ENCODE measurements at regions of chr19 and their contacts with region 1.

Region 1: DNA sequence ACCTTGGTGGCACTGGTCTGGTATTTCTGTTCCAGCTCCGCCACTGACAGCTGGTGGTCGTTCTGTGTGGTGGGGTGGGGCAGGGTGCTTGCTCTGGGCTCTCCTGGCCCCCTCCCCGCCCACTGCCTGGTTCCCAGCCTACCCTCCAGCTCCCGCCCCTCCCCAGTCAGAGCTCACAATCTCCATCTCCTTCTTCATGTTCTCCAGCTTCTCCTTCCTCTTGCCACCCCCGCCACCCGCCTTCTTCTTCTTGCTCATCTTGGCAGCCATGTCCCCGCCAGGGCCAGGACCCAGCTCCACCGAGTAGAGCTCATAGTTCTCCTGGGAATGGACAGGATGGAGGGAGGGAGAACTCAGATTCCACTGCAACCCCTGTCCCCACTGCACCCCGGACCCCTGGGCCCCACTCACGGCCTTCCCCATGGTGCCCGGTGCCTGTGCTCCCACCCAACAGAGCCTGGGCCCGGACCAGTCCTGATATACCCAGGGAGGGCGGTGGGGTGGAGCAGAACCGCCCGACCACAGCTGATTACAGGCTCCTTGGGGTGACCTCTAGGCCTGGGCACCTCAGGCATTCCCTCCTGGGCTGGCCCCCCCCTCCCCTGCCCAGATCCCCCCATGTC is at the start of gene ATP4A:
- DNase-seq: no peak
- H3K4me3 Mint-ChIP-seq: no peak within 1 kb of the TSS
- H3K27ac Mint-ChIP-seq: no peak within 1 kb of the TSS
- H3K4me1 Mint-ChIP-seq: peaks cover 4% of the 10 kb centered on the region
- H3K27me3 Mint-ChIP-seq: peaks cover 46% of the 10 kb centered on the region
- total RNA-seq, gene ATP4A: not detected

Region 2: DNA sequence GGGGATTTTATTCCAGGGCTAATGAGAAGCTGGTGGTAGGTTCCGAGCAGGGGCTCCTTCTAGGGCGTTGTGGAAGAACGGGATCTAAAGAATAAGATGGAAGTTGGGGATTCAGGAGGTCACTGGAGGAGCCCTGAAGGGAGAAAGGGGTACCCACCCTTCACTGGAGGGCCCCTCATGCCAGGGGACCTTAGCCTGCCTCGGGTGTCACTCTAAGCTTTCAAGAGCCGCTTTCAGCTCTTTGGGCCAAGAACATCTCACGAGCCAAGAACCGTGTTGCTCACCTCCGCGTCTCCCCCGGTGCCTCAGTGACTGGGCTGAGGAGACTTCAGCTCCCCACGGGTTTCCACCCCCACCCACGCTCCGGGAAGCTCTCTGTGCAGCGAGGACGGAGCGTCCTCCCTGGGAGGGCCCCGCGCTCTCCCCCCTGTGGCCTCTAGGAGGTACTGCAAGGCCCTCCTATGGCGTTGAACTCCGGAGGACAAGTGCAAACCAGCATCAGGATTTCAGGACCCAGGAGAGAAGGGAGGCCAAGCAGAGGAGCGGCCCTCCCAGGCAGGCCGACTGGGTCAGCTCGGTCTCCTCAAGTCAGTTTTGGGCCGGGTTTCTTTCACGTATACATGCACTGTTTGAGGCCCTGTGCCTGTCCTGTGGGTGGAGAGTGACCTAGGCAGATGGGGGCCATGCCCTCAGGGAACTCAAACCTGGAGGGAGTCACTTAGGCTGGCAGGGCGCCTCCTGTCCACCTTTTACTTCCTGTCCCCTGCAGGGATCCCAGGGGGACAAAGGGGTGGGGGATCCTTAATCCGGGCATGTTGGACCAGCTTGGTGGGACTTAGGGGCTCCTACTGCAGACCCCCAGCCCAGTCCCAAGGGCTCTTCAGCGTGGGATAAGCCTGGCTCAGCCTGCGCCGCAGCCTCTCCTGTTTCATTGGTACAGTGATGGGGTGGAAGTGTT is 67.9 kb before region 1 on chr19:
- CTCF ChIA-PET with region 1: no interaction called
- POLR2A ChIA-PET with region 1: no interaction called
- intact Hi-C with region 1: no loop called
- DNase-seq: peak; percentile 85
- H3K4me3 Mint-ChIP-seq: no peak overlapping the region
- H3K27ac Mint-ChIP-seq: no peak overlapping the region
- H3K4me1 Mint-ChIP-seq: peaks cover 5% of the 10 kb centered on the region
- H3K27me3 Mint-ChIP-seq: no peaks in the 10 kb centered on the region

Region 3: DNA sequence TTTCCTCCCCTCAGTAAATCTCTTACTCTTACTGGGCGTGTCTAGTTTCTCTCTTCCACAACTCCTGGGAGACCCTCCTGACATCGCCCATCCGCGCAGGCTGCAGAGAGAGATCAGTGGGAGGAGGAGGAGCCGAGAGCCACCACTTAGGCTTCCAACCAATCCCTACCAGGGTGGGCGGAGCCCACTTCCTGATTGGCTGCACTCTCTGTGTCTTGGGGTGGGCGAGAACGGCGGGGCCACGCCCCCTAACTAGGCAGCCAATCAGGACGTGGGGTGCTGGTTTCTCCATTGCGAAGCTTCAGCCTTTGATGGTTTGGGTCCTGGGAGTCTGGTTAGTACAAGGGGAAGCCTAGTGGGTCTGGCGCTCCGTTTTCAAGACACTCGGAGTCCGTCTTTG is 22.5 kb after region 1 on chr19 and contains the start of gene PMIS2:
- CTCF ChIA-PET with region 1: no interaction called
- POLR2A ChIA-PET with region 1: no interaction called
- intact Hi-C with region 1: loop called (anchors 1 kb)
- DNase-seq: peak; percentile 20
- H3K4me3 Mint-ChIP-seq: no peak within 1 kb of the TSS
- H3K27ac Mint-ChIP-seq: no peak within 1 kb of the TSS
- H3K4me1 Mint-ChIP-seq: no peaks in the 10 kb centered on the region
- H3K27me3 Mint-ChIP-seq: peaks cover 10% of the 10 kb centered on the region
- total RNA-seq, gene PMIS2: not detected

Region 4: DNA sequence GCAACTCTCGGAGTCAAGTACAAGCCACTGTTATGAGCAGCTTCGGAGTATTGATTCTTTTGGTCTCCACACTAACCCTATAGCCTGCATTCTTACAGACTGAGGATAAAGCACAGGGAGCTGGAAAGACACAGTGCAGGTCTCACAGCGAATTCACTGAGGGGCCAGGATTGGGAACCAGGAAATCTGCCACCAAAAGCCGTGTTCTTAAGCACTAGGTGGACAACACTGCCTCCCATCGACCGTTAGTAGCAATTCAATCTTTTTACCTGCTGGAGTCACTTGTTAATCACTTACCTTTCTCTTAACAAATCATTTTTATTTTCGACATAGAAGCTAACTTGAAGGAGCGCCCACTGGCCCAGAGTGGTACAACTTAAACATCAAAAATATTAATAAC is 28.9 kb after region 1 on chr19:
- CTCF ChIA-PET with region 1: interaction called, 10 read pairs
- POLR2A ChIA-PET with region 1: no interaction called
- intact Hi-C with region 1: no loop called
- DNase-seq: peak; percentile 30
- H3K4me3 Mint-ChIP-seq: no peak overlapping the region
- H3K27ac Mint-ChIP-seq: no peak overlapping the region
- H3K4me1 Mint-ChIP-seq: peaks cover 5% of the 10 kb centered on the region
- H3K27me3 Mint-ChIP-seq: peaks cover 3% of the 10 kb centered on the region

Measured in activated CD4-positive, alpha-beta memory T cell treated with anti-CD3 and anti-CD28 coated beads for 36 hours (primary cell).